ENCODE measurements at regions of chr20 and their contacts with region 1.

Region 1: GRCh38 chr20:17569616-17570346 is at the start of gene DSTN:
- DNase-seq: peak; percentile 86
- H3K4me3 Mint-ChIP-seq: peak within 1 kb of the TSS; percentile 94
- H3K27ac Mint-ChIP-seq: peak within 1 kb of the TSS; percentile 93
- H3K4me1 Mint-ChIP-seq: peaks cover 19% of the 10 kb centered on the region
- H3K27me3 Mint-ChIP-seq: peaks cover 6% of the 10 kb centered on the region
- total RNA-seq, gene DSTN: 58.2 and 58.8 TPM in 2 replicates

Region 2: DNA sequence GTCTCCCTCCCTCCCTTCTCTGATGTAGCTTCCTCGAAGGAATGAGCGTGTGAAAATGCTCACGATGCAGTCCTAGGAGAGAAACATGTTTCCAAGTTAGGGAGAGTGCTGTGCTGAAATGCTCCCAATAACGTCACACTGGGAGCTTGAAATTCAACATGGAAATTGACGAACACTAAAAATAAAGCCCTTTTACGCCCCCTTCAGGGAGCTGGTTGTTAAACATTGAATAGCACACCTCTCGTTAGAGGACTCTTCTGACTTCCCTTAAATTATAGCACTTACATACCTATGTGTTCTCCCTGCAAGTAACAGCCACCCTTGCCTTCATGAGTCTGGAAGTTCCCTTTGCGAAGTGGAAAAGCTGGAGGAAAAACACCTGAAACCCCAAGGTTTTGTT is 127.2 kb before region 1 on chr20:
- intact Hi-C with region 1: no loop called
- DNase-seq: no peak
- H3K4me3 Mint-ChIP-seq: no peak overlapping the region
- H3K27ac Mint-ChIP-seq: no peak overlapping the region
- H3K4me1 Mint-ChIP-seq: no peaks in the 10 kb centered on the region
- H3K27me3 Mint-ChIP-seq: peaks cover 7% of the 10 kb centered on the region

Region 3: GRCh38 chr20:17530716-17531664 is 38.8 kb before region 1 on chr20 and contains the start of gene BFSP1:
- intact Hi-C with region 1: loop called (anchors 1 kb)
- DNase-seq: peak; percentile 44
- H3K4me3 Mint-ChIP-seq: peak within 1 kb of the TSS; percentile 88
- H3K27ac Mint-ChIP-seq: peak within 1 kb of the TSS; percentile 95
- H3K4me1 Mint-ChIP-seq: peaks cover 30% of the 10 kb centered on the region
- H3K27me3 Mint-ChIP-seq: peaks cover 12% of the 10 kb centered on the region
- total RNA-seq, gene BFSP1: 0.76 and 0.80 TPM in 2 replicates

Region 4: DNA sequence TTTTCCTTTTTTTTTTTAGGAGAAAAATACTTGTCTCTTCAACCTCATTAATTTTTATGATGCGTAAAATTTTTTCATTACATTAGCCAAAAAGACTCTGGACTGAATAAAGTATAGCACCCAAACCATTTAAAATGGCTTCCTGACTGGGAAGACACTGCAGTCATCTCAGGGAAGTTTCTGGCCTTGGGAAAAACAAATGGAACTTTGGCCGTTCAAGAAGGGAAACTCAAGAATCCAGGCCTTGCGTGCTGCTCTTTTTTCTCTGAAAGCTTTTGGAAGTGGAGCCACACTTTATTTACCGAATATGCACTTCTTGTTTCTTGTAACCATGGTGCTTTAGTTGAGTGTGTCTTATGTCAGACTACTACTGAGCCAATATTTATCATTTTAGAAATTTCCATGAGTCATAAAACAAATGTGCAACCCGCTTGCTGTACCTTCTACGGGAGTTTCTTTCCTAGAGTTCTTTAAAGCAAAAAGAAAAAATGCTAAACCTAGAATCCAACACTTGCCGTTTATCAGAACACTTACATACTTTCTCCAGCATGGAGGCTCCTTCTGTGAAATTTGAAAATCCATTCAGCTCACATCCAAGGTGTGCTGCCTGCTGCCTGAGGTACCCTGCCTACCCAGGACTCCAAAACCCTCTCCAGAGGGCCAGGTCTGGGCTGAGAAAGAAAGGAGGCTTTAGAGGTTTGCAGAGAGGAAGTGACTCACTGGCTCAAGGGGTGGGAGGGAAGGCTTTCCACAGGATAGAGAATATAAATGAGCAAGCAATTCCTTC is 11.4 kb before region 1 on chr20:
- intact Hi-C with region 1: loop called (anchors 1 kb)
- DNase-seq: no peak
- H3K4me3 Mint-ChIP-seq: peak overlapping the region; percentile 71
- H3K27ac Mint-ChIP-seq: peak overlapping the region; percentile 95
- H3K4me1 Mint-ChIP-seq: peaks cover 43% of the 10 kb centered on the region
- H3K27me3 Mint-ChIP-seq: no peaks in the 10 kb centered on the region

Region 5: GRCh38 chr20:17611540-17612286 is 41.9 kb after region 1 on chr20:
- intact Hi-C with region 1: loop called (anchors 2 kb)
- DNase-seq: no peak
- H3K4me3 Mint-ChIP-seq: no peak overlapping the region
- H3K27ac Mint-ChIP-seq: peak overlapping the region; percentile 97
- H3K4me1 Mint-ChIP-seq: peaks cover 27% of the 10 kb centered on the region
- H3K27me3 Mint-ChIP-seq: no peaks in the 10 kb centered on the region